Activated naive CD4-positive, alpha-beta T cell treated with anti-CD3 and anti-CD28 coated beads for 36 hours (primary cell): ENCODE measurements at regions of chr3 and their contacts with region 1.

Region 1: DNA sequence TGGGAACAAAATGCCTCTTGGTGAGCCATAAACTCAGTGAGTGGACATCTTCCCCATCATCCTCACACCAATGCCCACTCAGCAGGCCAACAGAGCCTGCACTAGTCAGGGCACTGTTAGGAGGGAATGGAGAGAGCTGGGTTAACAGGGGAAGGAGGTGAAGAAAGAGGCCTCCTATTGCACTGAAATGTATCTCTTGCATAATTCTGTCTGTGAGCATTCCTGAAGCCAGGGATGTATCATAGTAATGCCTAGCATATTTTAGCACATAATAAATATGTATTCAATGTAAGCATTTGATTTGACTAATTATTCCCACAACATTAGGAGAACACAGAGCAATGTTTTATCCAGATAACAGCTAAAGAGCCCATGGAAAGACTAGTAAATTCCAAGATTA is 81.2 kb downstream of the ANO10 start:
- DNase-seq: no peak
- H3K4me3 Mint-ChIP-seq: no peak overlapping the region
- H3K27ac Mint-ChIP-seq: no peak overlapping the region
- H3K4me1 Mint-ChIP-seq: peaks cover 2% of the 10 kb centered on the region
- H3K27me3 Mint-ChIP-seq: no peaks in the 10 kb centered on the region

Region 2: GRCh38 chr3:43638594-43639447 is 98.2 kb after region 1 on chr3:
- CTCF ChIA-PET with region 1: interaction called, 3 read pairs
- intact Hi-C with region 1: loop called (anchors 1 kb)
- DNase-seq: peak; percentile 77
- H3K4me3 Mint-ChIP-seq: no peak overlapping the region
- H3K27ac Mint-ChIP-seq: no peak overlapping the region
- H3K4me1 Mint-ChIP-seq: peaks cover 7% of the 10 kb centered on the region
- H3K27me3 Mint-ChIP-seq: peaks cover under 1% of the 10 kb centered on the region

Region 3: DNA sequence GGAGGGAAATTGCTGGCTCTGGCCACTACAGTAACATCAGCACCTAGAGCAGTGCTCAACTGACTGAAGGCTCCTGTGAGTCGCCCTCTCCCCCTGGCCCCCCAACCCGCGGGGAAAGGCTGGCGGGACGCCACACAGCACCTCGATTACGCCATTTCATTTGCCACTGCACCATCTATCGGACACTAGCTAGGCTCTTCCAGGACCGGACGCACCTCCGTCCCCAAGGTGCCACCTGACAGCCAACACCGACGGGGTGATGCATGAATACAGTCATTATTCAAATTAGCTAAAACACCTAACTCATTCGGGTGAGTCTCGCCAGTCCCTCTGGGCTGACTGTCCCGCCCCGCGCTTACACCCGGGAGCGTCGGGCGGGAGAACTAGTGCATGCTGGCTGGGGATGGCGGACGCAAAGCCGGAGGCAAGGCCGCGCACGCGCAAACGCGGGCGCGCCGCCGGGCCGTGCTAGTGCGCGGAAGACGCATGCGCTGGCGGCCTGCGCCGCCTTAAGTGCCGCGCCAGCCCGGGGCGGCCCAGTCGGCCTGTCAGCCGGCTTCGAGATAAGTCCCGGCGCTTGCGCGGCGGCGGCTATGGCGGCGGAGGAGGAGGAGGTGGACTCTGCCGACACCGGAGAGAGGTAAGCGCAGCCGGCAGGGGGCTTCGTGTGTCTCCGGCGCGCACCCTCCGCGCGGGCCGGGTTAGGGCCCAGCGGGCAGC is 149.9 kb after region 1 on chr3 and contains the start of gene ABHD5:
- CTCF ChIA-PET with region 1: no interaction called
- intact Hi-C with region 1: loop called (anchors 1 kb)
- DNase-seq: peak; percentile 85
- H3K4me3 Mint-ChIP-seq: peak within 1 kb of the TSS; percentile 83
- H3K27ac Mint-ChIP-seq: peak within 1 kb of the TSS; percentile 85
- H3K4me1 Mint-ChIP-seq: peaks cover 31% of the 10 kb centered on the region
- H3K27me3 Mint-ChIP-seq: no peaks in the 10 kb centered on the region
- total RNA-seq, gene ABHD5: 9.4 to 11.0 TPM

Region 4: GRCh38 chr3:43759297-43759782 is 218.7 kb after region 1 on chr3:
- CTCF ChIA-PET with region 1: interaction called, 3 read pairs
- intact Hi-C with region 1: loop called (anchors 5 kb)
- DNase-seq: peak; percentile 17
- H3K4me3 Mint-ChIP-seq: no peak overlapping the region
- H3K27ac Mint-ChIP-seq: no peak overlapping the region
- H3K4me1 Mint-ChIP-seq: peaks cover 46% of the 10 kb centered on the region
- H3K27me3 Mint-ChIP-seq: no peaks in the 10 kb centered on the region

Region 5: GRCh38 chr3:43855674-43856299 is 315.2 kb after region 1 on chr3:
- CTCF ChIA-PET with region 1: no interaction called
- intact Hi-C with region 1: loop called (anchors 5 kb)
- DNase-seq: peak; percentile 71
- H3K4me3 Mint-ChIP-seq: no peak overlapping the region
- H3K27ac Mint-ChIP-seq: no peak overlapping the region
- H3K4me1 Mint-ChIP-seq: peaks cover 2% of the 10 kb centered on the region
- H3K27me3 Mint-ChIP-seq: peaks cover 46% of the 10 kb centered on the region